ENCODE measurements at regions of chr22 and their contacts with region 1.

Region 1: DNA sequence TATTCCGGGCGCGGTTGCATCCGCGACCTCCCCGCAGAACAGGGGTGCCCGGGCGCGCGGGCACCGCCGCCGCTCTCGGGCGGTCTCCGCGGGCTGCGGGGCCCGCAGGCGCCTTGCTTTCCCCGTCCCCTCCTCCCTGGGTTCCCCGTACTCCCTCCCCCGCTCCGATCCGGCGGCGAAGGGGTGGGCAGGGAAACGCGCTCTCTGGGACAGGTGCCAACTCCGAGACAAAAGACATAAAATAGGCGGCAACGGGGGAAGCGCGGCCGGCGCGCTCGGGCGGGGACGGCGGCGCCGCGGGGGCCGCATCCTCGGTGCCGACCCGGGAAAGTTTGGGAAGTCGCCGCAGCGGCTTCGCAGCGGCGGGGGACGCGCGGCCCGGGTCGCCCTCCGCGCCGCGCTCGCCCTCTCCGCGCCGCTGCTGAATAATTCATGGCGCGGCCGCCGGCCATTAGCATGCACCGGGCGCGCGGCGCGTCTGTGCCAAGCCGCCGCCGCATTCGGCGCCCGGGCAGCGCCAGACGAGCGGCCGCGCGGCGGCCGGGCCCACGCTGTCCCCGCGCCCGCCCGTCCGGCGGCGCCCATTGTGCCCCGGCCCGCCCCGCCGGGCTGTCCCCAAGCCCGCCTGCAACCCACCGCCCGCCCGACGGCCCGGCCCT is 78.7 kb upstream of the PPARA start:
- DNase-seq: peak; percentile 72
- ATAC-seq: peak; percentile 7
- H3K4me3 ChIP-seq: peak overlapping the region in 4 of 5 experiments; percentile 31 to 70 (median 66)
- H3K4me3 Mint-ChIP-seq: peak overlapping the region; percentile 89
- H3K27ac ChIP-seq: no peak overlapping the region
- H3K27ac Mint-ChIP-seq: peak overlapping the region; percentile 81
- H3K4me1 ChIP-seq: peaks cover 22 to 29% of the 10 kb centered on the region in 2 donors
- H3K4me1 Mint-ChIP-seq: peaks cover 32% of the 10 kb centered on the region
- H3K27me3 ChIP-seq: peaks cover 0 to 2% (median 0%) of the 10 kb centered on the region in 4 experiments
- H3K27me3 Mint-ChIP-seq: peaks cover 4% of the 10 kb centered on the region
- CTCF ChIP-seq: no peak

Region 2: DNA sequence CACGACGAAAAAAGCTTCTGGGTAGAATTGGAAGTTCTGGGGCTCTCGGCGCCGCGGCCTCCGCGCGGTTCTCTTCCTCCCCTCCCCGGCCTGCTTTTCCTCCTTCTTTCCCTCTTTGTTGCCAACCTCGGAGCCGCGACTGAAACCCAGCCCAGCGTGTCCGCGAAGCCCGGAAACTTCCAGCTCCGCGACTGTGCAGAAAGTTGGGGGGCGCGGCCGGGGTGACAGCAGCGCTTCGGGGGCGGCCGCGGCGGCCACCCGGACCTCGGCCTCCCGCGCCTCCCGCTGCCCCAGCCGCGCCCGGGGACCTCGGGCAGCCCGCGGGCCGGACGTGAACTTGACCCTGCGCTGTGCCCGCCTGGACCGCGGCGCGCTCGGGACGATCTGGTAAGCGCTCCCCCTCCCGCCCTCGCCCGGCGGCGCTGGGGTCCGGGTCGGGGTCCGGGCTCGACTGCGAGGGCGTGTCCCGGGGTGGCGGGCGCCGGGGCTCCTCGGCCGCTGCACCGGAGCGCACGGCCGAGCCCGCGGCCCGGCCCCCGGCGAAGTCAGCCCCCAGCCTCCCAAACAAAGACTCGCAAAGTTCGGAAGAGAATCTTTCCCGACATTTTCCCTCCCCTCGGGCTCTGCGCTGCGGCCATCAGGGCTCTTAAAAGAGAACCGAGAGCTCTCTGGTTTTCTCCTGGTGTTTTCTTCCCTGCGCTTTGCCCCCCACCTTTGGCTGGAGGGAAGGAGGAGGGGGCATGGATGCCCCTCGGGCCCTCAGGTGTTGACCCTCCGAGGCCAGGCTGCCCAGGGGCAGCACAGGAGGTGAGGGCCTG is 26.8 kb before region 1 on chr22:
- CTCF ChIA-PET with region 1: no interaction called
- POLR2A ChIA-PET with region 1: interaction called, 3 read pairs
- intact Hi-C with region 1: loop called (anchors 2 kb)
- DNase-seq: peak; percentile 24
- ATAC-seq: peak; percentile 49
- H3K4me3 ChIP-seq: peak overlapping the region; percentile 15 to 74 (median 61)
- H3K4me3 Mint-ChIP-seq: peak overlapping the region; percentile 88
- H3K27ac ChIP-seq: peak overlapping the region; percentile 47 to 54
- H3K27ac Mint-ChIP-seq: peak overlapping the region; percentile 92
- H3K4me1 ChIP-seq: peaks cover 35 to 46% of the 10 kb centered on the region in 2 donors
- H3K4me1 Mint-ChIP-seq: peaks cover 42% of the 10 kb centered on the region
- H3K27me3 ChIP-seq: peaks cover 0 to 5% (median 0%) of the 10 kb centered on the region in 4 experiments
- H3K27me3 Mint-ChIP-seq: no peaks in the 10 kb centered on the region
- CTCF ChIP-seq: no peak

Region 3: GRCh38 chr22:46057762-46058420 is 13.7 kb before region 1 on chr22:
- CTCF ChIA-PET with region 1: interaction called, 3 read pairs
- POLR2A ChIA-PET with region 1: interaction called, 11 read pairs
- intact Hi-C with region 1: loop called (anchors 2 kb)
- DNase-seq: peak; percentile 83
- ATAC-seq: peak; percentile 70
- H3K4me3 ChIP-seq: peak overlapping the region in 2 of 5 experiments; percentile 18 to 28
- H3K4me3 Mint-ChIP-seq: peak overlapping the region; percentile 62
- H3K27ac ChIP-seq: peak overlapping the region; percentile 57 to 89
- H3K27ac Mint-ChIP-seq: peak overlapping the region; percentile 97
- H3K4me1 ChIP-seq: peaks cover 31 to 49% of the 10 kb centered on the region in 2 donors
- H3K4me1 Mint-ChIP-seq: peaks cover 51% of the 10 kb centered on the region
- H3K27me3 ChIP-seq: no peaks in the 10 kb centered on the region
- H3K27me3 Mint-ChIP-seq: no peaks in the 10 kb centered on the region
- CTCF ChIP-seq: no peak

Region 4: DNA sequence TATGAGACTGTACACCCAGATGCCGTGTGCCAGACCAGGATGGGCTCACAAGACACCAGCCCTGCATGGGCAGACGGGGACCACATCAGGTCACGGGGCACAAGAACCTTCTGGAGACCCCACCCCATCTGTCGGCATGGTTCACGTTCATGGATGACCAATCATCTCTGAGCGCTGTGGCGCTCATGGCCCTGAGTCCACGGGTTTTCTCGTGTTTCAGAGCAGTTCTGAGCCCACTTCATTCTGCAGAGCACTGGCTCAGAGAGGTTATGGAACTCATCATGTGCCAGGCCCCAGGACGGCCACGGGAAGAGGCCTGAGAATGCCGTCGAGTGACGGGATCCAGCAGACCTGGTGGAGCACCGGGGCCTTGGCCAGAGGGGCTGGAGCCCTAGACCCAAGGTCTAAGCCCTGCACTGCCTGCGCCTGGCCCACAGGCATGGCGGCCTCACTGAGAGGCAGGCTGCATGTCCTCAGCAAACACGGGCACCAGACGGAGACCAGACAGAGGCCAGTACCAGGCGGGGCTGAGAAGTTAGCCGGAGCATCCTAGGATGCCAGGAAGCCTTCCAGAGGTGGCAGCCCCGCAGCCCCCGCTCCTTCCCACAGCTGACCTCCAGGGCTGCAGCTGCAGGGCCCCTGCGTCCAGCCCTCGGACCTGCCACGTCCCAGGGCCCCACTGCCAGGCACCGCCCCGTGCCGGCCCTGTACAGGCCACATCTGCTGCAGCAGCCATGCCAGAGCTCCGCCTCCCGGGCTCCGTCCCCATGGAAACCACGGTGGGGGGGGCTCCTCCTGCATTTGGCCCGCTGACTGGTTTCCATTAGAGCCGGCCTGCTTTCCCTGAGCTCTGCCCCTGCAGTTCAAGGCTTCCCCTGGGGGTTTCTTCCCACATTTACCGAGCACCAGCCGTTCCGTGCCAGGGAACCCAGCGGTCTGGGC is 16.0 kb after region 1 on chr22:
- CTCF ChIA-PET with region 1: no interaction called
- POLR2A ChIA-PET with region 1: no interaction called
- intact Hi-C with region 1: no loop called
- DNase-seq: no peak
- ATAC-seq: no peak
- H3K4me3 ChIP-seq: no peak overlapping the region
- H3K4me3 Mint-ChIP-seq: no peak overlapping the region
- H3K27ac ChIP-seq: no peak overlapping the region
- H3K27ac Mint-ChIP-seq: no peak overlapping the region
- H3K4me1 ChIP-seq: no peaks in the 10 kb centered on the region
- H3K4me1 Mint-ChIP-seq: no peaks in the 10 kb centered on the region
- H3K27me3 ChIP-seq: no peaks in the 10 kb centered on the region
- H3K27me3 Mint-ChIP-seq: no peaks in the 10 kb centered on the region
- CTCF ChIP-seq: no peak

Region 5: DNA sequence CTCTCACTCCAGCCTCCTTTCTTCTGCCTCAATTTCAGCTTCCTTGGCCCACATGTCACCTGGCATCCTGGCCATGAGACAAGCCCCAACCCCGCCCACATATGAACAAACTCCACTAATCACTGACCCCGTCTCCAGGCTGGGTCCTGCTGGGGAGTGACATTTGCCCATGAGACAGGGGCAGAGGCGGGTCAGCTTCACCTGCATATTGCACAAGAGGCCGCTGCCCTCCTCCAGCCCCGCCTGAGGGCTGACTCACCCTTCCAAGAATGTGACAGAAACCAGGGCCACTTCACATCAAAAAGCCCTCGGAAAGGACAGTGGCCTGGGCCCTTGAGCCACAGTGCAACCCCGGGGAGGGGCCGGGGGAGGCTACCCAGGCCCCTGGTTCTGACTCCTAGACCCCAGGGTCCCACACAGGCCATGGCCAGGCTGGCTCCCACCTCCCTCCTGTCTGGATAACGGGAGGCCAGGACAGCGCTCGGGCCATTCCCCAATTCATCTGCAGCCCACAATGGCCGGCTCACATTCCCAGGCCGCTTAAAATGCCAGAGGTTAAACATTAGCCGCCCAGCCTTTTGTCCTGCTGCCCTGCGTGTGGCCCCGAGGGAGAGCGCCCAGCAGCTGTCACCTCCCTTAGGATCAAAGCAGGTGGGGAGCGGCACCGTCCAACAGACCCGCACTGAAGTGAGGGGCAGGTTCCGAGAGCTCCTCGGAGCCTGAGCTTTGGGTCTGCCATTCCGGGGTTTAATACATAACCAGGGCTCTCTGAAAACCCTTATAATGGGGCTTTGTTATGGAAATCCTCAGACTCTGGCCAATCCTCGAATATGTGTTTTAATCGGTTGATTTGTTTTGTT is 306.2 kb after region 1 on chr22:
- CTCF ChIA-PET with region 1: no interaction called
- POLR2A ChIA-PET with region 1: no interaction called
- intact Hi-C with region 1: no loop called
- DNase-seq: no peak
- ATAC-seq: no peak
- H3K4me3 ChIP-seq: no peak overlapping the region
- H3K4me3 Mint-ChIP-seq: no peak overlapping the region
- H3K27ac ChIP-seq: no peak overlapping the region
- H3K27ac Mint-ChIP-seq: no peak overlapping the region
- H3K4me1 ChIP-seq: peaks cover 9 to 20% of the 10 kb centered on the region in 2 donors
- H3K4me1 Mint-ChIP-seq: peaks cover 5% of the 10 kb centered on the region
- H3K27me3 ChIP-seq: peaks cover 0 to 6% (median 0%) of the 10 kb centered on the region in 4 experiments
- H3K27me3 Mint-ChIP-seq: no peaks in the 10 kb centered on the region
- CTCF ChIP-seq: no peak